Right cardiac atrium (tissue), 5 donors: ENCODE measurements at regions of chr10 and their contacts with region 1.

Region 1: GRCh38 chr10:11986593-11987216 is 55.9 kb downstream of the UPF2 start:
- DNase-seq: peak; percentile 80 to 92 (median 80)
- ATAC-seq: peak; percentile 47 to 66
- H3K4me3 ChIP-seq: no peak overlapping the region
- H3K27ac ChIP-seq: no peak overlapping the region
- H3K4me1 ChIP-seq: no peaks in the 10 kb centered on the region
- H3K27me3 ChIP-seq: no peaks in the 10 kb centered on the region

Region 2: DNA sequence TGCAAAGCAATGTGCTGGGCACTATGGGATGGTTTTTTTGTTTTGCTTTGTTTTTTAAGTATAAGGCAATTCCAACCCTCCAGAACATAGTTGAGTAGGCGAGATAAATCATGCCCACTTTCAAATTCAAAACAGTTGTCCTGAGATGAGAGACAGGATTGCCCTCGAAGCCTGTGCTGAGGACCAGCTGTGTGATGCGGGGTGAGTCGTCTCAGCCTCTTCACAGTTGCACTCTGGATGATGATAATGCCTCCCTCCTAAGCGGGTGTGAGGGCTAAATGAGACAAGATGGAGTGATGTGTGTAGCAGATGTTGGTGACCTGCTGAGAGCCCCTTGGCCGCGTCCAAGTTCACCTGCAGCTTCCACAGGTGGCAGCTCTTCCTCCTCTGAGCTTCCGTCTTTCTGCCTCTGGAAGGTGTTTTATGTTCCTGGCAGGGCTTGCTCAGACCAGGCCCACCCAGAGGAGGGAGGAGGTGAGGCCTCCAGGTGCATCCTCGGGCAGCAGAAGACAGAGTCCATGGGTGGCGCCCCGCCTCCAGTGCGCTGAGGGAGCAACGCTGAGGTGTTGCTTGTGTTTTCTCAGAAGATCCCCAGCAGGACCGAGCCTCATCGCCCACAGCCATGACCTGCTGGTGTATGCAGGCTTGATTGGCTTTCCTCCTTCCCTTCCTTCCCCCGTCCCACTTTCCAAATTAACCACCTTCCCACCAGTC is 214.0 kb before region 1 on chr10:
- intact Hi-C with region 1: no loop called
- DNase-seq: no peak
- ATAC-seq: no peak
- H3K4me3 ChIP-seq: no peak overlapping the region
- H3K27ac ChIP-seq: no peak overlapping the region
- H3K4me1 ChIP-seq: no peaks in the 10 kb centered on the region
- H3K27me3 ChIP-seq: no peaks in the 10 kb centered on the region

Region 3: GRCh38 chr10:11782793-11783557 is 203.7 kb before region 1 on chr10:
- intact Hi-C with region 1: loop called in 2 of 4 experiments (anchors 5 kb)
- DNase-seq: no peak
- ATAC-seq: peak; percentile 36 to 40
- H3K4me3 ChIP-seq: no peak overlapping the region
- H3K27ac ChIP-seq: no peak overlapping the region
- H3K4me1 ChIP-seq: no peaks in the 10 kb centered on the region
- H3K27me3 ChIP-seq: no peaks in the 10 kb centered on the region

Region 4: GRCh38 chr10:11793762-11794479 is 192.8 kb before region 1 on chr10:
- intact Hi-C with region 1: loop called in 2 of 4 experiments (anchors 5 kb)
- DNase-seq: no peak
- ATAC-seq: peak; percentile 14 to 50
- H3K4me3 ChIP-seq: no peak overlapping the region
- H3K27ac ChIP-seq: no peak overlapping the region
- H3K4me1 ChIP-seq: no peaks in the 10 kb centered on the region
- H3K27me3 ChIP-seq: no peaks in the 10 kb centered on the region

Region 5: GRCh38 chr10:11798845-11799735 is 187.6 kb before region 1 on chr10:
- intact Hi-C with region 1: loop called in 2 of 4 experiments (anchors 5 kb)
- DNase-seq: no peak
- ATAC-seq: peak; percentile 53 to 75
- H3K4me3 ChIP-seq: no peak overlapping the region
- H3K27ac ChIP-seq: no peak overlapping the region
- H3K4me1 ChIP-seq: no peaks in the 10 kb centered on the region
- H3K27me3 ChIP-seq: no peaks in the 10 kb centered on the region

Region 6: GRCh38 chr10:12027539-12027938 is 40.8 kb after region 1 on chr10:
- intact Hi-C with region 1: no loop called
- DNase-seq: no peak
- ATAC-seq: no peak
- H3K4me3 ChIP-seq: no peak overlapping the region
- H3K27ac ChIP-seq: no peak overlapping the region
- H3K4me1 ChIP-seq: no peaks in the 10 kb centered on the region
- H3K27me3 ChIP-seq: no peaks in the 10 kb centered on the region